ENCODE measurements at regions of chr12 and their contacts with region 1.

Region 1: GRCh38 chr12:53727310-53728041 is at the start of gene CALCOCO1:
- DNase-seq: peak; percentile 95 to 99 (median 96)
- H3K4me3 ChIP-seq: peak within 1 kb of the TSS; percentile 72
- H3K4me3 Mint-ChIP-seq: peak within 1 kb of the TSS; percentile 91 to 100 (median 96)
- H3K27ac ChIP-seq: peak within 1 kb of the TSS; percentile 59
- H3K27ac Mint-ChIP-seq: peak within 1 kb of the TSS; percentile 79 to 98 (median 95)
- H3K4me1 ChIP-seq: peaks cover 23% of the 10 kb centered on the region
- H3K4me1 Mint-ChIP-seq: peaks cover 21 to 33% (median 27%) of the 10 kb centered on the region in 4 donors
- H3K27me3 ChIP-seq: no peaks in the 10 kb centered on the region
- H3K27me3 Mint-ChIP-seq: no peaks in the 10 kb centered on the region
- total RNA-seq, gene CALCOCO1: 177 to 178 TPM

Region 2: DNA sequence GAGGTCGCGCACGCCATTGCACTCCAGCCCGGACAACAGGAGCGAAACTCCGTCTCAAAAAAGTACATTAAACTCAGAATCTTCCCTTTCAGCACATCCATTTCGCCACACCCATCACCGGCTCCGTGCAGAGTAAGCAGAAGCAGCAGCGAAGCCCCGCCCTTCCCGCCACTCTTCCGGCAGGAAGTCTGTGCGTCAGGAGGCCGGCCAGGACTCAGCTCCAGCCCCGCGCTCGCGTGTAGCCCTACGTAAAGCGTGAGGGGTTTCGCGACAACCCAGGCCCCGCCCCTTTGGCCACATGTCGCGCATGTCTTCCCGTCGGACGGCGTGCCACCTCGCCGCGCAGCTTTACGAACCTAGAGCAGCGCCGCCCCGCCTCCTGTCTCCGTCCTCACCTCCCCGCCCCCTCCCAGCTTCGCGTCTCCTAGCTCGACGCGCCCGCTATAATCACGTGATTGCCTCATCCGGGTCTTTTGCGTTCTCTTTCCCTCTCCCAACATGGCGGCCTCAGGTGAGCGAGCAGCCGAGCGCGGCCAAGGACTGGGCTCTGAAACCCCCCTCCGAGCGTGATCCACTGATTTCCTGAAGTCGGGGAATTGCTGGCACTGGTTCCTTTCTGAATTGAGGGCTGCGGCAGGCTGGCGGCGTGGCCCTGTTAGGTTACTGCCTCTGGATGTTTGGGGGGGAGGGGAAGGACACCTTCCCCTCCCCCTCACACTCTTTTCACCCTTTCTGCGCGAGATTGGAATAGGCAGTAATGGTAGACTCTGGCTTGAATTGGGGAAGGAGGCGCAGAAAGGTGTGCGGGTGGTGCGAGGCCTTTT is 721.3 kb before region 1 on chr12 and contains the start of gene EIF4B:
- CTCF ChIA-PET with region 1: no interaction called
- POLR2A ChIA-PET with region 1: no interaction called
- intact Hi-C with region 1: loop called (anchors 1 kb)
- DNase-seq: peak; percentile 97 to 100 (median 100)
- H3K4me3 ChIP-seq: peak within 1 kb of the TSS; percentile 99 to 100
- H3K4me3 Mint-ChIP-seq: peak within 1 kb of the TSS; percentile 99 to 100 (median 99)
- H3K27ac ChIP-seq: peak within 1 kb of the TSS; percentile 94
- H3K27ac Mint-ChIP-seq: peak within 1 kb of the TSS; percentile 99 to 100 (median 99)
- H3K4me1 ChIP-seq: peaks cover 51% of the 10 kb centered on the region
- H3K4me1 Mint-ChIP-seq: peaks cover 26 to 58% (median 43%) of the 10 kb centered on the region in 4 donors
- H3K27me3 ChIP-seq: no peaks in the 10 kb centered on the region
- H3K27me3 Mint-ChIP-seq: no peaks in the 10 kb centered on the region
- total RNA-seq, gene EIF4B: 730 to 777 TPM

Region 3: DNA sequence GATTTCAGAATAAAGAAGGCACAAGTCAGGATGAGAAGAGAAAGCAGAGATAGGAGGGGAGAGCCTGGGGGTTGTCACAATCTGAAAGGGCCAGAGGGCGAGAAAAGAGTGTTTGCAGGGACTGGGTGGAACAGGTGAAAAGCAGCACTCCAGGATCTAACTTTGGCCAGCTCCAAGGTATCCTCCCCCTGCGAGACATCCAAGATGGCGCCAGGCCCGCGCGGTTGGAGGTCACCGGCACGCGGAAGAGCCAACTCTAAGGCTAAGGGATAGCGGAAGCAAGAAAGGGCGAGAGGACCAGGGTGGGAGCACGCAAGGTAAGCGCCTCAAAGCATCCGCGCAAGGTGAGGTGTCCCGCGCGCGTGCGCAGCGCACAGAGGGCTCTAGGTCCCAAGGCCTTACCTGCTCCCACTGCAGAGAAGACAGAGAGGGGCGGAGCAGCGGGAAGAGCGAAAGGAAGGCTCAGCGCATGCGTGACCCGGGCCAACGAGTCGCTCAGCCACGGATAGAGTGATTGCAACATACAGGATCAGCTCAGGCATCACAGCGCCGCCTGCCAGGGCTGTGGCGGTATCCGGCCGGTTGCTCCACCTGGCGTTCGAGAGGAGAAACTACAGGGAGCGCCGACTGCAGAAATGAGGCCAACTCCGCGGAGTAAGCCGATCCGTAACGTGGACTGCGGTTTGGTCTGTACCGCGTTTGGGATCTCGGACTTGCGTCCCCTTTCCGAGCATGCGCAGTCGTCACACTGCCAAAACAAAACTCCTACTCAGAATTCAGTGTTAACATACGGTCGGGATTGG is 51.6 kb before region 1 on chr12 and contains the start of gene ATP5MC2:
- CTCF ChIA-PET with region 1: interaction called, 7 read pairs
- POLR2A ChIA-PET with region 1: interaction called, 31 read pairs
- intact Hi-C with region 1: loop called (anchors 1 kb)
- DNase-seq: peak; percentile 96 to 98 (median 98)
- H3K4me3 ChIP-seq: peak within 1 kb of the TSS; percentile 82 to 89
- H3K4me3 Mint-ChIP-seq: peak within 1 kb of the TSS; percentile 91 to 98 (median 95)
- H3K27ac ChIP-seq: peak within 1 kb of the TSS; percentile 59
- H3K27ac Mint-ChIP-seq: peak within 1 kb of the TSS; percentile 93 to 98 (median 97)
- H3K4me1 ChIP-seq: peaks cover 36% of the 10 kb centered on the region
- H3K4me1 Mint-ChIP-seq: peaks cover 18 to 40% (median 31%) of the 10 kb centered on the region in 4 donors
- H3K27me3 ChIP-seq: peaks cover 8% of the 10 kb centered on the region
- H3K27me3 Mint-ChIP-seq: peaks cover 15% of the 10 kb centered on the region in 2 donors
- total RNA-seq, gene ATP5MC2: 238 to 246 TPM

Region 4: DNA sequence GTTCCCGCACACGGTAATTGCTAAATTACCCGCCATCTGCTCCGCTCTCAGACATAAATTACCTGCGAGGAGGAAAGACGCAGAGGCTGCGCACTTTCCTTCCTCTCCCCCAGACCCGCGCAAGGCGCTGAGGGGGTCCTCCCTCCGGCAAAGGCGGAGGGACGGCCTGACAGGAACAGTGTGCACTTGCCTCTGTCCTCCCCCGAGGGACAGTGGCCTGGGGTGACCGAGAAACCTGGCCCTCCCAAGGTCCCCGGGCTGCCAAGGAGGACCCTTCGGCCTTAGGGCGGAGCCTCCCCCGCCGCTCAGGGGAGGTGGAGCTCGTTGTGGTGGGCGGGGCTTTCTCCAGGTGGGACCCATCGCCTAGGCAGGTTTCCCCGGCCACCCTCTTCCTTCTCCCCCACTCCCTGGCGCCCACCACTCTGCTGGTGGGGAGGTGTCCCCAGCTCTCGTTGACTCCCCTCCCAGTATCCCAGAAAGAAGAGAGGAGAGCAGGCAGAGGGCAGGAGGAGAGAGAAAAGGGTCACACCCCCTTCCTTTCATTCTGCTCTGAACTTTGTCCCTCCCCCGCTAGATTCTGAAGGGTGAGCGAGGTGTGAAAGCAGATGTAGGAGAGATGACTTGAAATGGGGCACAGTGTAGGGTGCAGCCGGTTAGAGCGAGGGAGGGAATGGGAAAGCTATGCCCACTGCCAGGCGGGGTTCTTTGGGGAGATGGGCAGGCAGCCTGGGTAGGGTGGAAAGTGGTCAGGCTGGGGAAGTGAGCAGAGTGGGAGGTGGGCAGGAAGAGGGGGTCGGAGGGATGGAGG is 11.1 kb after region 1 on chr12:
- CTCF ChIA-PET with region 1: interaction called, 290 read pairs
- POLR2A ChIA-PET with region 1: interaction called, 22 read pairs
- intact Hi-C with region 1: loop called (anchors 1 kb)
- DNase-seq: peak; percentile 32 to 61 (median 38)
- H3K4me3 ChIP-seq: peak overlapping the region; percentile 20 to 23
- H3K4me3 Mint-ChIP-seq: peak overlapping the region in 6 of 8 donors; percentile 66 to 79 (median 78)
- H3K27ac ChIP-seq: no peak overlapping the region
- H3K27ac Mint-ChIP-seq: peak overlapping the region in 2 of 7 donors; percentile 3 to 35
- H3K4me1 ChIP-seq: peaks cover 26% of the 10 kb centered on the region
- H3K4me1 Mint-ChIP-seq: peaks cover 15 to 32% (median 21%) of the 10 kb centered on the region in 4 donors
- H3K27me3 ChIP-seq: peaks cover 41% of the 10 kb centered on the region
- H3K27me3 Mint-ChIP-seq: peaks cover 17 to 39% of the 10 kb centered on the region in 2 donors

Region 5: DNA sequence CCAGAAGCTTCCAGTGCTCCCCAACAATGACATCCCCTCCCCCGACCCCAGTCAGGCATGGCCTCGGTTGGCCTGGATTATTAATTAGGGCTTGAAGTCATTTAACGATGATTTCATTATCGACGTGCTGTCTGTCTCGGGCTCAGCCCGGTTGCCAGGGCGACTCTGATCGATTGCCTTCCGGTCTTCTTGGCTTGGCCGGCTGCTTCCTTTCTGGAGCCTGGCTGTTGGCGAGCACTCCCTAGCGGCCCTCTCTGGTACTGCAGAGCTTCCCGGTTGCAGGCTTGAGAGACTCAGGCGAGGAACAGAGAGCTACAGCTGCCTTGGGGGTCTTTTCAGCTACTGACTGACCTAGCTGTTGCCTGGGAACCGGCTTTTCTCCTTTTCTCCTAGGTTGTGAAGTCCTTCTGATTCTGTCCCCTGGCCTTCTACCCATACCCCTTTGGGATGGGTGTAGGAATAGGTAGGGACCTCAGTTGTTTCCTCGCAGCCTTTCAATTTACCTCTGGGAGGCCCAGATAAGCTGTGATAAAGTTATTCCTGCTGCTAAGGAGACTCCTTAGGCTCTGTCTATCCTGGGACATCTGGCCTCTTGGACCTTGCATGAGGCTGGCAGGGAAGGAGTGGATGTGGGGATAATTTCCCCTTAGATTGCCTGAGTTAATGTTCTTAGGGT is 29.8 kb after region 1 on chr12:
- CTCF ChIA-PET with region 1: interaction called, 16 read pairs
- POLR2A ChIA-PET with region 1: no interaction called
- intact Hi-C with region 1: no loop called
- DNase-seq: peak; percentile 67 to 74 (median 71)
- H3K4me3 ChIP-seq: peak overlapping the region in 1 of 2 donors; percentile 12
- H3K4me3 Mint-ChIP-seq: peak overlapping the region; percentile 47 to 75 (median 65)
- H3K27ac ChIP-seq: no peak overlapping the region
- H3K27ac Mint-ChIP-seq: peak overlapping the region in 5 of 7 donors; percentile 39 to 83 (median 65)
- H3K4me1 ChIP-seq: peaks cover 11% of the 10 kb centered on the region
- H3K4me1 Mint-ChIP-seq: peaks cover 2 to 10% (median 8%) of the 10 kb centered on the region in 4 donors
- H3K27me3 ChIP-seq: peaks cover 21% of the 10 kb centered on the region
- H3K27me3 Mint-ChIP-seq: peaks cover 27 to 31% of the 10 kb centered on the region in 2 donors

Measured in CD4-positive, alpha-beta memory T cell (primary cell).